HCT116 (cell line): ENCODE measurements at regions of chr2 and their contacts with region 1.

Region 1: GRCh38 chr2:192286093-192286701 is 91.5 kb upstream of the TMEFF2 start:
- DNase-seq: peak; percentile 31
- ATAC-seq: peak; percentile 70
- H3K4me3 ChIP-seq: no peak overlapping the region
- H3K27ac ChIP-seq: no peak overlapping the region
- H3K4me1 ChIP-seq: no peaks in the 10 kb centered on the region
- H3K27me3 ChIP-seq: no peaks in the 10 kb centered on the region
- CTCF ChIP-seq: peak; percentile 26 to 64 (median 52); a peak in 5 of 6 replicates
- POLR2A ChIP-seq: no peak
- RAD21 ChIP-seq: peak; percentile 71

Region 2: GRCh38 chr2:191555092-191555742 is 731.0 kb before region 1 on chr2:
- CTCF ChIA-PET with region 1: no interaction called
- POLR2A ChIA-PET with region 1: no interaction called
- RAD21 ChIA-PET with region 1: no interaction called
- intact Hi-C with region 1: loop called (anchors 5 kb)
- DNase-seq: peak; percentile 73
- ATAC-seq: peak; percentile 98
- H3K4me3 ChIP-seq: no peak overlapping the region
- H3K27ac ChIP-seq: no peak overlapping the region
- H3K4me1 ChIP-seq: peaks cover 0 to 5% of the 10 kb centered on the region in 2 experiments; a peak in 2 of 4 replicates
- H3K27me3 ChIP-seq: no peaks in the 10 kb centered on the region
- CTCF ChIP-seq: peak; percentile 56 to 80 (median 66); a peak in 5 of 6 replicates
- POLR2A ChIP-seq: no peak
- RAD21 ChIP-seq: peak; percentile 92

Region 3: GRCh38 chr2:192194866-192195547 is 91.2 kb before region 1 on chr2 and contains the start of gene TMEFF2:
- CTCF ChIA-PET with region 1: no interaction called
- POLR2A ChIA-PET with region 1: no interaction called
- RAD21 ChIA-PET with region 1: no interaction called
- intact Hi-C with region 1: loop called (anchors 5 kb)
- DNase-seq: no peak
- ATAC-seq: no peak
- H3K4me3 ChIP-seq: peak within 1 kb of the TSS; percentile 43 to 48
- H3K27ac ChIP-seq: no peak within 1 kb of the TSS
- H3K4me1 ChIP-seq: no peaks in the 10 kb centered on the region
- H3K27me3 ChIP-seq: no peaks in the 10 kb centered on the region
- CTCF ChIP-seq: no peak
- POLR2A ChIP-seq: no peak
- RAD21 ChIP-seq: no peak
- total RNA-seq, gene TMEFF2: not detected